ENCODE measurements at regions of chr10 and their contacts with region 1.

Region 1: DNA sequence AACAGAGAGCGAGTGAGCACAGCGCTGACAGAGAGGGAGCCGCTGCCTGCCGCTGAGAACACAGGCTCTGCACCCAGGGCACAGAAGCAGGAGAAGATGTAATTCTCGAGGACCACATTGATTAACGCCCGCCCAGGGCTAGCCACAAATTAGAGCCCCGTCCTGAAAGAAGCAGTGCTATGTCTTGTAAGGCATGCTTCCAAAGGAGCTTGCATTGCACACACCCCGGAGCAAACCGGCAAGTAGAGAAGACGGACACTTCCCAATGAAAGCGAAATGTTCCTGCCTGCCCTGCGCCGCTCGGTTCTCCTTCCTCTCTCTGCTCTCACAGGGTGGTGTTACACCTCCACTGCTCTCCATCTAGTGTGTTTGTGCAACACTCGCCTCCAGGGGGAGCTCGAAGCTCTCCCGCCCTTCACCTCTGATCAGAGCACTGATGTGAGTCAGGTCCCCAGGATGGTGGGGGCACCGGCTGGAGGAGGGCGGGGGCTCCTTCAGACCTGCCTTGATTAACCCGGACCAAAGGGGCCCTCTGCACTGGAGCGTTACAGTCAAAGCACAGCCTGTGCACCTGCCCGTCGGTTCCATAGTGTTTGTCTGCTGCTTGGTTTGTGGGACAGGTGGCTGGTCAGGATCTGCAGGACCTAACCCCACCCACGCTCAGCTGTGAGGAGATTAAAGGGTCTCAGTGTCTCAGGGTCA is 316.5 kb downstream of the ADARB2 start:
- DNase-seq: peak; percentile 71
- ATAC-seq: peak; percentile 85
- H3K4me3 Mint-ChIP-seq: peak overlapping the region; percentile 65
- H3K27ac Mint-ChIP-seq: peak overlapping the region; percentile 47
- H3K4me1 Mint-ChIP-seq: peaks cover 60% of the 10 kb centered on the region
- H3K27me3 Mint-ChIP-seq: no peaks in the 10 kb centered on the region
- CTCF ChIP-seq: peak; percentile 98

Region 2: DNA sequence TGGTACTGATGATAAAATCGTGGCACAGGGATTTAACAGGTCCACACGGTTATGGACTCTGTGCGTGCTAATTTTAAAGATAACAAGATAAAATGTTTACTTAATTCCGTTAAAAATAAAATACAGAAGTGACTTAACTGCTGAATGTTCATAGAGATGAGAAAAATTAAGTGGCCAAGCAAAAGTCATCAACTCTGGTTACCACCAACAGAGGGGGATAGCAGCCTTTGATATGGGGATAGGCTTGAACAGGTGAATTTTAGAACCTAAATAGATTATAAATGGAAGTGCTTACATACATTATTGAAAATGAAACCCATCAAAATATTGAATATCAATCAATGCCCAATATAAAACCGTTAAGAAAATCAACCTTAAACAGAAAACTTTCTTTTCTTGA is 119.7 kb before region 1 on chr10:
- CTCF ChIA-PET with region 1: no interaction called
- POLR2A ChIA-PET with region 1: no interaction called
- intact Hi-C with region 1: no loop called
- DNase-seq: no peak
- ATAC-seq: no peak
- H3K4me3 Mint-ChIP-seq: no peak overlapping the region
- H3K27ac Mint-ChIP-seq: no peak overlapping the region
- H3K4me1 Mint-ChIP-seq: no peaks in the 10 kb centered on the region
- H3K27me3 Mint-ChIP-seq: peaks cover 12% of the 10 kb centered on the region
- CTCF ChIP-seq: no peak

Region 3: GRCh38 chr10:1488969-1489548 is 68.2 kb after region 1 on chr10:
- CTCF ChIA-PET with region 1: interaction called, 3 read pairs
- POLR2A ChIA-PET with region 1: interaction called, 9 read pairs
- intact Hi-C with region 1: loop called (anchors 1 kb)
- DNase-seq: peak; percentile 52
- ATAC-seq: peak; percentile 90
- H3K4me3 Mint-ChIP-seq: peak overlapping the region; percentile 56
- H3K27ac Mint-ChIP-seq: peak overlapping the region; percentile 85
- H3K4me1 Mint-ChIP-seq: peaks cover 62% of the 10 kb centered on the region
- H3K27me3 Mint-ChIP-seq: no peaks in the 10 kb centered on the region
- CTCF ChIP-seq: no peak

Region 4: DNA sequence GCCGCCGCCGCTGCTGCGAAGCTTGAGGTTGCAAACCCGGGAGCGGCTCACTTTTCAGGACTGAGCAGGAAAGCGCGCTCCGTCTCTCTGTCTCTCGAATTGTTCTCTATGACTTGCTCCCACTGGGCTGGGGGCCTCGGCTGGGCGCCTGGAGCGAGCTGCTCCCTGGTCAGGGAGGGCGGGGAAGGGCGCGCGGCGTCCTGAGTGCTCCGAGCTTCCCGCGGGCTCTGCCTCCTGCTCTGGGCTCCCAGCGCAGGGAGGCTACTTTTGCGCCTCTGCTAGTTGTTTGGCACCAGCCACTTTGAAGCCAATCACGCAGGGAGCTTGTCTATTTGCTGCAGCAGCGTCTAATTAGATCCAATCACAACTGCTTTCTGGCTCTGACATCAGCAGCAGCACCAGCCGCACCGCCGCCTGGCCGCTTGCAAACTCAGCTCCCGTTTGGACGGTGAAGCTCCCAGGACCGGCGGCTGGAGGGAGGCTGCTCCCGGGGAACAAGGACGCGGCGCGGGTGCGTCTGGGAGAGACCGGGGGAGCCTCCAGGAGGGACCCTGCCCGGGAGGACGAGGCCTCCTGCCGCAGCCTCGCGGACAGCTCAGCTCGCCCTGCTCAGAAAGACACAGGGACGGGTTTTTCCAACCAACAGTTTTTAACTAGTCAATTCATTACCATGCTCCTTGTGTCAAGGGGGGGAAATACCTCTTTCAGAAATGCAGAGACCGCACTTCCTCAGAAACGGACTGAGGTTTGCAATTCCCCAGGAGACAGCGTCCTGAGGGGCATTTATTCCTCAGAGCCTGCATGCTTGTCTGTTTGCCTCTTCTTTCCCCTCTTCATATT is 316.6 kb after region 1 on chr10 and contains the start of gene ADARB2:
- CTCF ChIA-PET with region 1: interaction called, 3 read pairs
- POLR2A ChIA-PET with region 1: interaction called, 3 read pairs
- intact Hi-C with region 1: loop called (anchors 2 kb)
- DNase-seq: peak; percentile 30
- ATAC-seq: peak; percentile 49
- H3K4me3 Mint-ChIP-seq: peak within 1 kb of the TSS; percentile 70
- H3K27ac Mint-ChIP-seq: no peak within 1 kb of the TSS
- H3K4me1 Mint-ChIP-seq: peaks cover 37% of the 10 kb centered on the region
- H3K27me3 Mint-ChIP-seq: peaks cover 66% of the 10 kb centered on the region
- CTCF ChIP-seq: no peak
- total RNA-seq, gene ADARB2: 0.10 and 0.11 TPM in 2 replicates

Region 5: GRCh38 chr10:1911771-1912170 is 491.0 kb after region 1 on chr10:
- CTCF ChIA-PET with region 1: no interaction called
- POLR2A ChIA-PET with region 1: no interaction called
- intact Hi-C with region 1: loop called (anchors 10 kb)
- DNase-seq: no peak
- ATAC-seq: no peak
- H3K4me3 Mint-ChIP-seq: no peak overlapping the region
- H3K27ac Mint-ChIP-seq: no peak overlapping the region
- H3K4me1 Mint-ChIP-seq: no peaks in the 10 kb centered on the region
- H3K27me3 Mint-ChIP-seq: no peaks in the 10 kb centered on the region
- CTCF ChIP-seq: no peak

Region 6: GRCh38 chr10:3043512-3044368 is 1622.9 kb after region 1 on chr10:
- CTCF ChIA-PET with region 1: interaction called, 3 read pairs
- POLR2A ChIA-PET with region 1: no interaction called
- intact Hi-C with region 1: loop called (anchors 1 kb)
- DNase-seq: peak; percentile 34
- ATAC-seq: peak; percentile 76
- H3K4me3 Mint-ChIP-seq: no peak overlapping the region
- H3K27ac Mint-ChIP-seq: no peak overlapping the region
- H3K4me1 Mint-ChIP-seq: peaks cover 3% of the 10 kb centered on the region
- H3K27me3 Mint-ChIP-seq: peaks cover 17% of the 10 kb centered on the region
- CTCF ChIP-seq: no peak